ENCODE measurements at regions of chr7 and their contacts with region 1.

Region 1: GRCh38 chr7:19491821-19492452 is 216.9 kb downstream of the POLR1F start:
- DNase-seq: no peak
- H3K4me3 ChIP-seq: no peak overlapping the region
- H3K27ac ChIP-seq: no peak overlapping the region
- H3K4me1 ChIP-seq: no peaks in the 10 kb centered on the region
- H3K27me3 ChIP-seq: no peaks in the 10 kb centered on the region
- CTCF ChIP-seq: peak in 1 of 3 donors; percentile 35
- POLR2A ChIP-seq: no peak

Region 2: GRCh38 chr7:18639711-18640110 is 852.2 kb before region 1 on chr7:
- intact Hi-C with region 1: loop called (anchors 5 kb)
- DNase-seq: no peak
- H3K4me3 ChIP-seq: no peak overlapping the region
- H3K27ac ChIP-seq: peak overlapping the region; percentile 41 to 71
- H3K4me1 ChIP-seq: no peaks in the 10 kb centered on the region
- H3K27me3 ChIP-seq: no peaks in the 10 kb centered on the region
- CTCF ChIP-seq: no peak
- POLR2A ChIP-seq: no peak

Region 3: DNA sequence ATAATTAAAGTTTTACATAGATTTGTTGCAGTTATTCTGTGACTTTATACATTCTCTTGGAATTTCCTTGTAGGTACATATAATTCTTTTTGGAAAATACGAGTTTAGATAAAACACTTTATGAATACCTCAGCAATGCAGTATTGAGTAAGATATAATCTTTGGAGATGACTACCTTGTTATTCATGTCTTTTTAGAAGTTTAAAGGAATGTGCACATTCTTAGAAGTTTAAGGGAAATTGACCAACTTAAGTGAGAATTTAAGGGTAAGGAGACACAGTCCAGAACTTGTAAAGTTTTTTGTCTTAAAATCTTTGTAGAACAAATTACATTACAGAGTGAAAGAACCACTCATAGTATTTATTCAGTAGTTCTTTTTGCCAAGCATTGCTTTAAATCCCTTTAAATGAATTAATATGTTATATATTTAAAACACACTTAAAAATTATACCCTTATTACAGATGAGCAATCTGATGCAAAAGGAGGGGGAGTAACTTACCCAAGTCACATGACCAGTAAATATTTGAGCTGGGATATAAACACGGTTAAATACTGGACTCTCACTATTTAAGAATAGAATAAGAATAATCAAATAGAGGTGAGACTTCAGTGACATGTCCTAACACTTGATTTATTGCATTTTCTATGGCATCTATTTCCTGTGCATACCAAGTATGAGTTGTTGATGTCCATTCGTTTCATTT is 207.2 kb before region 1 on chr7:
- intact Hi-C with region 1: no loop called
- DNase-seq: no peak
- H3K4me3 ChIP-seq: no peak overlapping the region
- H3K27ac ChIP-seq: no peak overlapping the region
- H3K4me1 ChIP-seq: no peaks in the 10 kb centered on the region
- H3K27me3 ChIP-seq: no peaks in the 10 kb centered on the region
- CTCF ChIP-seq: no peak
- POLR2A ChIP-seq: no peak

Region 4: DNA sequence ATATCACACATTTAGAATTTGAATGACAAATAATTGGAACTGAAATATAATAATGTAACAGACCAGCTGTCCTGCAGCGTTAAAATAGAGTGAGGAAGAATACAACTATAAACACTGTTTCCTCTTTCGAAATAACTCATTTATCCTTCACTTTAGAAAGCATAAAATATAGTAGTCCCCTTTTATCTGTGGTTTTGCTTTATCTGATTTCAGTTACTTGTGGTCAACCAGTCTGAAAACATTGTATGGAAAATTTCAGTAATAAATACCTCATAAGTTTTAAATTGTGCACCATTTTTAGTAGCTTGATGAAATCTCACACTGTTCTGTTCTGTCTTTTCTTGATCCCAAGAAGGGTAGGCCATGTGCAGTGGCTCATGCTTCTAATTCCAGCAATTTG is 185.2 kb after region 1 on chr7:
- intact Hi-C with region 1: no loop called
- DNase-seq: no peak
- H3K4me3 ChIP-seq: no peak overlapping the region
- H3K27ac ChIP-seq: no peak overlapping the region
- H3K4me1 ChIP-seq: no peaks in the 10 kb centered on the region
- H3K27me3 ChIP-seq: no peaks in the 10 kb centered on the region
- CTCF ChIP-seq: no peak
- POLR2A ChIP-seq: no peak

Measured in breast epithelium (tissue), 4 donors.